Aorta (tissue), 5 donors: ENCODE measurements at regions of chr4 and their contacts with region 1.

Region 1: DNA sequence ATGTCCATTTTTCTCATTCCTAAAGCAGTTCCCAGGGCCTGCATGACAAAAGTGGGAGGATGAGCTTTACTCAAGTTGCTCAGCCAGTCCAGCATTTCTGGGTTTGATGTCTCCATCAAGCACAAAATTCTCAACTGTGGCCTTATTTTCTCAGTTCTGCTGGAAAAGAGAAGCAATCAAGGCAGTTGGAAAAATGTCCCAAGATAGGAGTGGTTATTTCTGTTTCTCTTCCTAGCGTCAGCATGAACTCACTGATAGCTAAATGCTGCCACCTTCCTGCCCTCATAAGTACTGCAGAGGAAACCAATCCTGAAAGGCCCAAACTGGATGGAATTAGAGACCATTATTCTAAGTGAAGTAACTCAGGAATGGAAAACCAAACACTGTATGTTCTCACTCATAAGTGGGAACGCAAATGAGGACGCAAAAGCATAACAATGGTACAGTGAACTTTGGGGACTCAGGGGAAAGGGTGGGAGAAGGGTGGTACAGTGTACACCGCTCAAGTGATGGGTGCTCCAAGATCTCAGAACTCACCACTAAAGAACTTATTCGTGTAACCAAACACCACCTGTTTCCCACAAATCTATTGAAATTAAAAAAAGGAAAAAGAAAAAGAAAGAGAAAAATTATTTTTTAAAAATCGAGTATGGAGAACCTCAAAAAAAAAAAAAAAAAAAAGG is 29.6 kb downstream of the ADH7 start:
- DNase-seq: peak in 1 of 2 donors; percentile 65
- ATAC-seq: peak; percentile 90
- H3K4me3 ChIP-seq: no peak overlapping the region
- H3K27ac ChIP-seq: peak overlapping the region in 1 of 2 donors; percentile 92
- H3K4me1 ChIP-seq: peaks cover 0 to 3% of the 10 kb centered on the region in 2 donors
- H3K27me3 ChIP-seq: no peaks in the 10 kb centered on the region

Region 2: DNA sequence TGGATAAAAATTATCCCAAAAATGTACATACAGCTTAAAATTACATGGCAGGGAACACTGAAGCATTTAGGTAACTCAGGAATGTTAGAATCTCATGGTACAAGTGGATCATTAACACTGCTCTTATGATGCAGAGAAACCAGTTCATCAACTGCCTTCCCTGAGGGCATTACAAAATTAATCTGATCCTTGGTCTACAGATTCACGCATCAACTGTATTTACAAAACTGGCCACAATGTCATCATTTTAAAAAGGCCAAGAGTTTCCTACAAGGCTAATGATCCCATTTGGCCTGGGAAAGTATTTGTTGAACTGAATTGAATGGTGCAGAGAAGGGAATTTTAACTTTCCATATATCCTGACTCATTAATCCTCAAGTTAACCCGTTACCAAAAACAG is 831.8 kb before region 1 on chr4:
- intact Hi-C with region 1: no loop called
- DNase-seq: no peak
- ATAC-seq: no peak
- H3K4me3 ChIP-seq: no peak overlapping the region
- H3K27ac ChIP-seq: no peak overlapping the region
- H3K4me1 ChIP-seq: peaks cover 0 to 2% of the 10 kb centered on the region in 2 donors
- H3K27me3 ChIP-seq: no peaks in the 10 kb centered on the region

Region 3: GRCh38 chr4:98995183-98996055 is 410.2 kb before region 1 on chr4 and contains the start of gene METAP1:
- intact Hi-C with region 1: loop called in 1 of 2 experiments (anchors 5 kb)
- DNase-seq: peak; percentile 95 to 96
- ATAC-seq: peak; percentile 98
- H3K4me3 ChIP-seq: peak within 1 kb of the TSS; percentile 97 to 99
- H3K27ac ChIP-seq: peak within 1 kb of the TSS; percentile 76 to 81
- H3K4me1 ChIP-seq: no peaks in the 10 kb centered on the region
- H3K27me3 ChIP-seq: no peaks in the 10 kb centered on the region
- total RNA-seq, gene METAP1: 57.2 to 61.4 TPM

Region 4: DNA sequence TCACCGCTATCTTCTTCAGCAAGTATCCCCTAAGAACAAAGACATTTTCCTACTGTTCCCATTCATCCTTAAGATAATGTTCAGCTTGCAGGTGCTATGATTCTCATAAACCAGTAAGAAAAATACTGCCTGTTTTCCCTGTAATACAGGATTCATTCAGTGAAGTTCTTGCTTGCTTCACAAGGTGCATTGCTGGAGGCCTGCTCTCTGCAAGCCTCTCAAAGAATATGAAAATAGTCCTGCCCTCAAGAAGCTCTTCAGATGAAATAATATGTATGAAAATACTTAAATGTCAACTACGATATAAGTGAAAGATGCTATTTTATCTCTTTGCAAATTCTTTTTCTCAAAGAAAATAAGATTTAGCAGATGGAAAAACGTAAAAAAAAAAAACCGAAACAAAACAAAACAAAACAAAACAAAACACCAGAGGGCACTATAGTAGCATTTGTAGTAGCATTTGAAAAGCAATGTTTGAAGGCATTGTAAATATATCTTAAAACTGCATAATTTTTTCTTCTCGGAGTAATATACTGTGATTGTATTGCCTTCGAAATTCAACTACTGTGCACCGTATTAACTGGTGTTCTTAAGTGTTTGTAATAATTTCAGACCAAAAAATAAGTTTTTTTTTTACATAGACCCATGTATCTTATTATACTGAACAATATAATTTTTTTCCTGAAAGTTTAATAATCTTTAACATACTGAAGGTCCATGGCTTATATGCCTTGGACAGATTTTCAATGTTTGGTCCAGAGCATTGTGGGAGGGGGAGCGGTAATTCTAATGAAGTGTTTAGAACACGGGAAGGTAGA is 287.5 kb before region 1 on chr4:
- intact Hi-C with region 1: loop called (anchors 2 to 5 kb)
- DNase-seq: no peak
- ATAC-seq: peak; percentile 67
- H3K4me3 ChIP-seq: no peak overlapping the region
- H3K27ac ChIP-seq: no peak overlapping the region
- H3K4me1 ChIP-seq: no peaks in the 10 kb centered on the region
- H3K27me3 ChIP-seq: no peaks in the 10 kb centered on the region

Region 5: GRCh38 chr4:99300934-99301333 is 104.6 kb before region 1 on chr4:
- intact Hi-C with region 1: loop called in 1 of 2 experiments (anchors 5 kb)
- DNase-seq: peak; percentile 86 to 91
- ATAC-seq: peak; percentile 86
- H3K4me3 ChIP-seq: no peak overlapping the region
- H3K27ac ChIP-seq: peak overlapping the region in 1 of 2 donors; percentile 57
- H3K4me1 ChIP-seq: peaks cover 1 to 4% of the 10 kb centered on the region in 2 donors
- H3K27me3 ChIP-seq: no peaks in the 10 kb centered on the region

Region 6: DNA sequence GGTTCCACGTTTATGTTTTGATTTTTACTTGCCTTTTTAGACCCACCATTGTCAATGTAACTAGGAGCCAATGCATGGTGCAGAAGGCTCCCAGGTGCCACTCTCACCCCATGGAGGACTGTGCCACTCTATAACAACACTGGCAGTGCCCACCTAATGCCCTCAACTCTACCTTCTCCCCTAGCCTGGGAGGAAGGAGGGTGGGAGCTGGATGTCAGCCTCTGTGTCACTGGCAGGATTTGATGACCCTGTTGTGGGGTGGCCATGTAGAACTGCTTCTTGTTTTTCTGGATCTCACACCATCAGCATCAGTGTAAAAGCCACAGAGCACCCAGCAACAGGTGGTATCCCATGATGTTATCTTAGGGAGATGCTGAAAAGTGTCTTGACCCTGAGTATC is 70.7 kb before region 1 on chr4:
- intact Hi-C with region 1: no loop called
- DNase-seq: no peak
- ATAC-seq: no peak
- H3K4me3 ChIP-seq: no peak overlapping the region
- H3K27ac ChIP-seq: no peak overlapping the region
- H3K4me1 ChIP-seq: no peaks in the 10 kb centered on the region
- H3K27me3 ChIP-seq: no peaks in the 10 kb centered on the region

Region 7: GRCh38 chr4:99447079-99447478 is 41.5 kb after region 1 on chr4:
- intact Hi-C with region 1: no loop called
- DNase-seq: no peak
- ATAC-seq: no peak
- H3K4me3 ChIP-seq: no peak overlapping the region
- H3K27ac ChIP-seq: no peak overlapping the region
- H3K4me1 ChIP-seq: no peaks in the 10 kb centered on the region
- H3K27me3 ChIP-seq: no peaks in the 10 kb centered on the region

Region 8: DNA sequence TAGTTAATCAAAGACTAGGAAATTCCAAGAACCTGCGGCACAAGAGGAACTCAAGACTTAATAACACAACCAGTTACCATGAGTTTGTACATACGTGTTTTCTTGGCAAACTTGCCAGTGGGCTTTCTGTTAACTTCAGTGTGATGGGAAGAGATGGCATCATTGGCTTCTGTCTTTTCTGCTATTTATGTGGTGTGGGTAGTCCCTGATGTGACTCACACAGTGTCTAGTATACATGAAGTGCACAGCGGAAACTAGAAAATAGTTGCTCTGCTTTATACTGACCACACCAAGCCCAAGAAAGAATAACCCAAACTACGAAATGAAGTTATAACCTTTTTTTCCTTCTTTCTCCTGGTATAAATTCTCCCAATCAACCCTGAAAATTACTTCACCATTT is 435.6 kb after region 1 on chr4:
- intact Hi-C with region 1: no loop called
- DNase-seq: no peak
- ATAC-seq: no peak
- H3K4me3 ChIP-seq: no peak overlapping the region
- H3K27ac ChIP-seq: no peak overlapping the region
- H3K4me1 ChIP-seq: peaks cover 0 to 3% of the 10 kb centered on the region in 2 donors
- H3K27me3 ChIP-seq: no peaks in the 10 kb centered on the region